Activated CD4-positive, alpha-beta T cell treated with anti-CD3 and anti-CD28 coated beads for 36 hours (primary cell): ENCODE measurements at regions of chr2 and their contacts with region 1.

Region 1: DNA sequence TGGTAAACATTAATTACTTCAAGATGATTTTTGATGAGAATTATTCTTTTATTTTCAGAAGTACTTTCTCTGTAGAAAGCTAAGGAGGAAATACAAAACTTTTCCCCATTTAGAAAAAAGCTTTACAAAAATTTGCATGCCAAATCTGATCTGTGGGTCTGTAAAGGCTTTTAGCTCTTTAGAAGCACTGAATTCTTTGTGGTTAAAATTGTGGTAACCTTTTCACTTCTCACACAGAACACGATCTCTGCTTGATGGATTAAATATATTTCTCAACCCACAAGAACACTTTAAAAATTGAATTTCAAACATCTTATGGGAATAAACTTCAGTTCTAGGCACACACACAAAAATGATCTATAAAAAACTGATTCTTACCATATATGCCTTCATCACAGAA is 63.7 kb downstream of the VIL1 start:
- DNase-seq: no peak
- ATAC-seq: no peak
- H3K4me3 Mint-ChIP-seq: no peak overlapping the region
- H3K27ac Mint-ChIP-seq: peak overlapping the region; percentile 17
- H3K4me1 Mint-ChIP-seq: peaks cover 14% of the 10 kb centered on the region
- H3K27me3 Mint-ChIP-seq: no peaks in the 10 kb centered on the region

Region 2: DNA sequence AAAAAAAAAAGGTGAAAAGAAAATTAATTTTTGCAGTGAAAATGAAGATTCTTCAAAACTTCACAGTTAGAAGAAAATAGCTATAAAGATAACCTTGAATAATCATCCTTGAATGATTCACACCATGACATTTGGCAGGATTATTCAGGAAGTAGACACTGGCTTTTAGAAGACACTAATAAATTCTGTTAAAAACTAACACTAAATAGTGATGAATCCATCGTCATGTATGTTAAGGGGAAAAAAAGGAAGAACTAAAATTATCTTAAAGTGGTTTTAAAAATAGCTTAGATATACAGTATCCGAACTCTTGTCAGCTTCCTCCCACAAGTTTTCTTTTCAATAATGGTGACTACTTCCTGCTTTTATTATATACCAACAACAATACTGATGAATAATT is 75.3 kb after region 1 on chr2:
- CTCF ChIA-PET with region 1: no interaction called
- POLR2A ChIA-PET with region 1: no interaction called
- intact Hi-C with region 1: loop called in 1 of 2 experiments (anchors 5 kb)
- DNase-seq: no peak
- ATAC-seq: no peak
- H3K4me3 Mint-ChIP-seq: no peak overlapping the region
- H3K27ac Mint-ChIP-seq: no peak overlapping the region
- H3K4me1 Mint-ChIP-seq: peaks cover 20% of the 10 kb centered on the region
- H3K27me3 Mint-ChIP-seq: no peaks in the 10 kb centered on the region

Region 3: GRCh38 chr2:218671654-218672566 is 189.3 kb after region 1 on chr2 and contains the starts of genes RNF25 and STK36:
- CTCF ChIA-PET with region 1: no interaction called
- POLR2A ChIA-PET with region 1: no interaction called
- intact Hi-C with region 1: no loop called
- DNase-seq: peak; percentile 90
- ATAC-seq: peak; percentile 98
- H3K4me3 Mint-ChIP-seq: peak within 1 kb of the TSS; percentile 95
- H3K27ac Mint-ChIP-seq: peak within 1 kb of the TSS; percentile 87
- H3K4me1 Mint-ChIP-seq: peaks cover 22% of the 10 kb centered on the region
- H3K27me3 Mint-ChIP-seq: no peaks in the 10 kb centered on the region
- total RNA-seq, gene RNF25: 14.1 to 29.2 TPM
- total RNA-seq, gene STK36: 13.1 to 19.3 TPM